Activated T-helper 2 cell treated with anti-CD3 and anti-CD28 coated beads, Interferon-gamma antibody, Interleukin-2, Interleukin-4, amounts not matched to agents 10 μg/mL and 5 μg/mL and 100 μg/mL, durations not matched to agents 14 hours and 24 hours and 36 hours (primary cell): ENCODE measurements at regions of chr13 and their contacts with region 1.

Region 1: DNA sequence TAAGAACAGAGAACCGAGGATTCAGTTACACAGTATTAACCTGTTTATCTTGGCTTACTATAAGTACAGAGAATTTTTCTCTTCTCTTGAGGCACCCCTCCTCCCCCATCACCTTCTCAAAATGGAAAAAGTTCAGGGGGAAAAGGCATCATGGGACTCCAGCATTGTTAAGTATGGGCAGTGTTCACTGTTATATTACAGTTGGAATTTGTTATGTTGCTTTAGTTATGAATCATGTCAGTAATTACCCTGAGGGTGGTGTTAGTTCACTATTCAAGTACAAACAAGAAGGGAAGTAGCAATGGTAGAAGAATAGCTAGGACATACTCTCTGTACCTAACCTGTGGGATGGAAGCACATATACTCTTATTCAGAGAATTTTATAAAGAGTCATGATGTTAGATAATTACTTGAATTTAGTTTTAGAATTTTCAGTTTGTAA is 12.0 kb downstream of the LPAR6 start:
- DNase-seq: no peak
- H3K4me3 Mint-ChIP-seq: peak overlapping the region; percentile 20
- H3K27ac Mint-ChIP-seq: peak overlapping the region; percentile 22
- H3K4me1 Mint-ChIP-seq: peaks cover 49% of the 10 kb centered on the region
- H3K27me3 Mint-ChIP-seq: no peaks in the 10 kb centered on the region

Region 2: GRCh38 chr13:48303359-48304142 is 97.3 kb before region 1 on chr13 and contains the start of gene RB1:
- intact Hi-C with region 1: loop called (anchors 5 kb)
- DNase-seq: peak; percentile 89
- H3K4me3 Mint-ChIP-seq: peak within 1 kb of the TSS; percentile 99
- H3K27ac Mint-ChIP-seq: peak within 1 kb of the TSS; percentile 97
- H3K4me1 Mint-ChIP-seq: peaks cover 27% of the 10 kb centered on the region
- H3K27me3 Mint-ChIP-seq: no peaks in the 10 kb centered on the region
- total RNA-seq, gene RB1: 27.1 and 28.0 TPM in 2 replicates

Region 3: DNA sequence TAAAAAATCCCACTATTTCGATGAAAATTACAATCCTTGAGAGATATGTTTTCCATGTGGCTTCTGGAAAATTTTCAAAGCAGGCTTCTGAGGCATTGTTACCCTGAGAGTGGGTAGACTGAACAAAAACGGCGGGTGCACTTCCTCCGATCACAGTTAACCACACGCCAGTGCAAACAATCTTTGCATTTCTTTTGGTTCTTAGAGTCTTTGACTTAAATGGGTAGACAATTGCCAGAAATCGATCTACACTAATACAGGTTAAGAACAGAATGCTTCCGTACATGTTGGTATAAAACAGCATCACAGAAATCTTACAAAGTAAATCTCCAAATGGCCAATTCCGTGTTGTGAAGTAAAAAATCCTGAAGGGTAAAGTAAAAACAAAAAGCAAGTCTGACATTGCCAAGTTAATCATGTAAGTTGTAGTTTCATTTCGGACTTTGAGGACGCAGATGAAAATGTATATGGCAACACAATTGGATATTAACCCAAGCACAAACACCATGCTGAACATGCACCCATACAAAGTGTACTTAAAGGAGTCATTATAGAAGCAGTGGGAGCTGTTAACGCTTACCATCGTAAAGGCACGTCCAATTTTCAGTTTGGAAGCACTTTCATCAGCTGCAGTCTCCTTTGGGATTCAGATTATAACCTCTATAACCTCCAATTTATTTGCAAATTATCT is 11.1 kb after region 1 on chr13:
- intact Hi-C with region 1: loop called (anchors 1 kb)
- DNase-seq: no peak
- H3K4me3 Mint-ChIP-seq: peak overlapping the region; percentile 91
- H3K27ac Mint-ChIP-seq: peak overlapping the region; percentile 90
- H3K4me1 Mint-ChIP-seq: peaks cover 39% of the 10 kb centered on the region
- H3K27me3 Mint-ChIP-seq: no peaks in the 10 kb centered on the region

Region 4: DNA sequence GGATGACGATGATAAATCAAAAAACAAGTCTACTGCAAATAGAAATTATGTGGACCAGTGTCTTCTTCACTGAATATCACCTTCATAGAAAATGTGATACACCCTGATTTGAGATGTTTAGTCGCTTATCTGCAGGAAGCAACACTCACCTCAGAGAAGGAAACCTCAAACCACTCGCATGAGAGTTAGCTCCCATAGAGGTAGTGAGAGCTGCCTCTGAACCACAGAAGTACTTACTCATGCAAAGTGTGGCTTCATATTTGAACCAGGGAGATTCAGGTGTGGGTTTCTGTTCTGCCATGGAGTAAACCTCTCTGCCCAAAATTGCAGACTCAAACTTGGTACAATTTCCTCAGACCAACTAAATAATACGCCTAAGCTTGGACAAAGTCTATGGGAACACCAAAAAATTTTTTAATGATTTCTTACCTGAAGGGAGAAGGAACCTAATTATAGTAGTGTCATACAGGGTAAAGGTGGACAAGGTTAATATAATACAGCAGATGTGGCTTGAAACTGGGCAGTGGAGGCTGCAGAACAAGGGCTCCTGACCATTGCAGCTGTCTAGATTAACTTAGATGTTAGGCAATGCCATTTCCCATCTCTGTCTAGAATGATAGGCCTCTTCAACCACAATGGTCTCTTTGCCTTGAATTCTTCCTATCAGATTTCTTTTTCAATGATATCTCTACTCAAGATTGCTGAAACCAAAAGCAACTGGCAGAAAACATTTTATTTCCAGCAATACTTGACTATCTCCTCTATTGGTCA is 161.6 kb after region 1 on chr13:
- intact Hi-C with region 1: loop called (anchors 1 kb)
- DNase-seq: peak; percentile 78
- H3K4me3 Mint-ChIP-seq: peak overlapping the region; percentile 46
- H3K27ac Mint-ChIP-seq: peak overlapping the region; percentile 36
- H3K4me1 Mint-ChIP-seq: peaks cover 57% of the 10 kb centered on the region
- H3K27me3 Mint-ChIP-seq: peaks cover 46% of the 10 kb centered on the region

Region 5: GRCh38 chr13:48749699-48750473 is 349.0 kb after region 1 on chr13:
- intact Hi-C with region 1: loop called (anchors 2 kb)
- DNase-seq: peak; percentile 46
- H3K4me3 Mint-ChIP-seq: no peak overlapping the region
- H3K27ac Mint-ChIP-seq: peak overlapping the region; percentile 70
- H3K4me1 Mint-ChIP-seq: peaks cover 13% of the 10 kb centered on the region
- H3K27me3 Mint-ChIP-seq: peaks cover 2% of the 10 kb centered on the region

Region 6: DNA sequence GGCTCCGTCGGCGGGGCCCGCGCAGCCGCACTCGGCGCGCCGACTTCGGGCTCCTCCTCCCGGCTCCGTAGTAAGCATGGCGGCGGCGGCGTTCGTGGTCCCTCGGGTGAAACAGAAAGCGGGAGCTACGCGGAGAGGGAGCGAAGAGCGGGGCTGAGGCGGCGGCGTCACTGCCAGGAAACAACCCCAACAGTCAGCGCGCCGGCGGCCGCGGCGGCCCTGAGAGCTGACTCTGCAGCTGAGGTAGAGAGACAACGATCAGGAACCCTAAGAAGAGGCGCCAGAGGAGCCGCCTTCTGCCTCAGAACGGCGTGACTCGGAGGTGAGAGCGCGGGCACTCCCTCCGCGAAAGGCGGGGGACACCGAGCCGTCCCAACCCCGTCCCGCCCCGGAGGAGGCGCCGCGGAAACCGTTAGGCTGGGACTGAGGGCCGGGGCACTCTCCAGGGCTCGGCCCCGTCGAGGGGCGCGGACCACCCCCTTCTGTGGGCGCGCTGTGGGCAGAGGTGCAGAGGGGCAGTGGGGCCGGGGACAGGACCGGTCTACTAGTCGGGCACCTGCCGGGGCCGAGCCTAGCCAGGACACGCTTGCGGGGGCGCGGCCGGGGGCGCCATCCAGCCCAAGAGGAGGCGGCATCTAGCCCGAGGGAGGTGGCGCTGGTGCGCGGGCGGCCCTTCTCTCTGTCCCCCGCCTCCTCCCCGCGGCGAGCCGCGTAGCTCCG is 575.1 kb after region 1 on chr13 and contains the start of gene FNDC3A:
- intact Hi-C with region 1: loop called (anchors 10 kb)
- DNase-seq: peak; percentile 87
- H3K4me3 Mint-ChIP-seq: peak within 1 kb of the TSS; percentile 96
- H3K27ac Mint-ChIP-seq: peak within 1 kb of the TSS; percentile 98
- H3K4me1 Mint-ChIP-seq: peaks cover 34% of the 10 kb centered on the region
- H3K27me3 Mint-ChIP-seq: no peaks in the 10 kb centered on the region
- total RNA-seq, gene FNDC3A: 21.0 and 21.7 TPM in 2 replicates